ENCODE measurements at regions of chr3 and their contacts with region 1.

Region 1: GRCh38 chr3:40191850-40192448 is 117.6 kb upstream of the EIF1B start:
- DNase-seq: peak in 1 of 3 donors; percentile 38
- ATAC-seq: peak; percentile 88 to 93 (median 92)
- H3K4me3 ChIP-seq: no peak overlapping the region
- H3K27ac ChIP-seq: no peak overlapping the region
- H3K4me1 ChIP-seq: no peaks in the 10 kb centered on the region
- H3K27me3 ChIP-seq: no peaks in the 10 kb centered on the region
- CTCF ChIP-seq: peak; percentile 71 to 96 (median 94)
- POLR2A ChIP-seq: no peak

Region 2: GRCh38 chr3:40152482-40153133 is 39.3 kb before region 1 on chr3:
- intact Hi-C with region 1: no loop called
- DNase-seq: no peak
- ATAC-seq: no peak
- H3K4me3 ChIP-seq: no peak overlapping the region
- H3K27ac ChIP-seq: no peak overlapping the region
- H3K4me1 ChIP-seq: no peaks in the 10 kb centered on the region
- H3K27me3 ChIP-seq: no peaks in the 10 kb centered on the region
- CTCF ChIP-seq: no peak
- POLR2A ChIP-seq: no peak

Region 3: GRCh38 chr3:40317061-40317855 is 125.3 kb after region 1 on chr3:
- intact Hi-C with region 1: loop called (anchors 5 to 10 kb)
- DNase-seq: no peak
- ATAC-seq: peak; percentile 75 to 80 (median 78)
- H3K4me3 ChIP-seq: no peak overlapping the region
- H3K27ac ChIP-seq: no peak overlapping the region
- H3K4me1 ChIP-seq: peaks cover 0 to 9% (median 0%) of the 10 kb centered on the region in 4 donors
- H3K27me3 ChIP-seq: no peaks in the 10 kb centered on the region
- CTCF ChIP-seq: peak; percentile 79 to 90 (median 84)
- POLR2A ChIP-seq: no peak